ENCODE measurements at regions of chr20 and their contacts with region 1.

Region 1: DNA sequence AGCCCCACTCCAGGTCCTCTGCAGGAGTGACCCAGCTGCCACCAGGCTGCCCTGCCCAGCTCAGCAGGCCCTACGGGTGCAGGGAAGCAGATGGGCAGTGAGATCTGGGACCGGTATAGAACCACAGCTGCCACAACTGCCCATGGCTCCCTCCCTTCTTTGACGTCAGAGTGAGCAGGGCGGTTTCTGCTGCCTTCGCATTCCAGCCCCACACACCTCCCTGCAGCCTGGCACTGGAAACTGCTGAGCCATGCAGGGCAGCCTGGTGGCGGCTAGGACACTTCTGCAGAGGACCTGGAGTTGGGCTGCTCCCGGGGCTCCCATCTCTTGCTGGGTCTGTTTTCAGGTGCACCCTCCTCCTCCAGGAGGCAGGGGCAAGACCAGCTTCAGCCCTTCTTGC is 101.6 kb upstream of the CD93 start:
- DNase-seq: peak; percentile 64
- H3K4me3 Mint-ChIP-seq: no peak overlapping the region
- H3K27ac Mint-ChIP-seq: no peak overlapping the region
- H3K4me1 Mint-ChIP-seq: peaks cover 6% of the 10 kb centered on the region
- H3K27me3 Mint-ChIP-seq: no peaks in the 10 kb centered on the region
- CTCF ChIP-seq: no peak

Region 2: DNA sequence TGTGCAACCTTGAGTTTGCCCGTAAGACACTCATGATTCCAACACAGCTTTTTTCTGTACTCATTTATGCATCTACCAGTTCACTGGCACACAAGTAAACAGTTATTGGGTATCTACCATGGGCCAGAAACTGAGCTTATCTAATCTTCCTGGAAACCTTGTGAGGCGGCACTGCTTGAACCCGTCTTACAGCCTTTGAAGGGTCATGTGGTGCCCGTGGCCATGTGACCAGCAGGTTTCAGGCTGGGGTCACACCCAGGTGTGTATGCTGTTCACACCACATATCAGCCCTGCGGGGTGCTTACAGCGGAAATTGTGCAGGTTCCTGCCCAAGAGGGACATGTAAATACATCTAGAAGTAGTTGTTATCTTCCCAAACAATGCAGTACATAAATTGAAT is 144.4 kb before region 1 on chr20:
- CTCF ChIA-PET with region 1: no interaction called
- POLR2A ChIA-PET with region 1: no interaction called
- intact Hi-C with region 1: no loop called
- DNase-seq: no peak
- H3K4me3 Mint-ChIP-seq: no peak overlapping the region
- H3K27ac Mint-ChIP-seq: no peak overlapping the region
- H3K4me1 Mint-ChIP-seq: peaks cover 34% of the 10 kb centered on the region
- H3K27me3 Mint-ChIP-seq: no peaks in the 10 kb centered on the region
- CTCF ChIP-seq: no peak

Region 3: GRCh38 chr20:23156170-23156841 is 31.4 kb before region 1 on chr20:
- CTCF ChIA-PET with region 1: interaction called, 5 read pairs
- POLR2A ChIA-PET with region 1: interaction called, 10 read pairs
- intact Hi-C with region 1: no loop called
- DNase-seq: peak; percentile 93
- H3K4me3 Mint-ChIP-seq: no peak overlapping the region
- H3K27ac Mint-ChIP-seq: peak overlapping the region; percentile 99
- H3K4me1 Mint-ChIP-seq: peaks cover 70% of the 10 kb centered on the region
- H3K27me3 Mint-ChIP-seq: no peaks in the 10 kb centered on the region
- CTCF ChIP-seq: no peak

Region 4: GRCh38 chr20:23296841-23297701 is 109.3 kb after region 1 on chr20:
- CTCF ChIA-PET with region 1: no interaction called
- POLR2A ChIA-PET with region 1: no interaction called
- intact Hi-C with region 1: no loop called
- DNase-seq: no peak
- H3K4me3 Mint-ChIP-seq: no peak overlapping the region
- H3K27ac Mint-ChIP-seq: no peak overlapping the region
- H3K4me1 Mint-ChIP-seq: no peaks in the 10 kb centered on the region
- H3K27me3 Mint-ChIP-seq: no peaks in the 10 kb centered on the region
- CTCF ChIP-seq: no peak

Measured in MCF 10A (cell line).